ENCODE measurements at regions of chrX and their contacts with region 1.

Region 1: GRCh38 chrX:153971450-153972367 is at the start of gene HCFC1:
- DNase-seq: peak; percentile 96
- H3K4me3 Mint-ChIP-seq: peak within 1 kb of the TSS; percentile 98
- H3K27ac Mint-ChIP-seq: peak within 1 kb of the TSS; percentile 100
- H3K4me1 Mint-ChIP-seq: peaks cover 30% of the 10 kb centered on the region
- H3K27me3 Mint-ChIP-seq: no peaks in the 10 kb centered on the region
- total RNA-seq, gene HCFC1: 107 and 109 TPM in 2 replicates

Region 2: DNA sequence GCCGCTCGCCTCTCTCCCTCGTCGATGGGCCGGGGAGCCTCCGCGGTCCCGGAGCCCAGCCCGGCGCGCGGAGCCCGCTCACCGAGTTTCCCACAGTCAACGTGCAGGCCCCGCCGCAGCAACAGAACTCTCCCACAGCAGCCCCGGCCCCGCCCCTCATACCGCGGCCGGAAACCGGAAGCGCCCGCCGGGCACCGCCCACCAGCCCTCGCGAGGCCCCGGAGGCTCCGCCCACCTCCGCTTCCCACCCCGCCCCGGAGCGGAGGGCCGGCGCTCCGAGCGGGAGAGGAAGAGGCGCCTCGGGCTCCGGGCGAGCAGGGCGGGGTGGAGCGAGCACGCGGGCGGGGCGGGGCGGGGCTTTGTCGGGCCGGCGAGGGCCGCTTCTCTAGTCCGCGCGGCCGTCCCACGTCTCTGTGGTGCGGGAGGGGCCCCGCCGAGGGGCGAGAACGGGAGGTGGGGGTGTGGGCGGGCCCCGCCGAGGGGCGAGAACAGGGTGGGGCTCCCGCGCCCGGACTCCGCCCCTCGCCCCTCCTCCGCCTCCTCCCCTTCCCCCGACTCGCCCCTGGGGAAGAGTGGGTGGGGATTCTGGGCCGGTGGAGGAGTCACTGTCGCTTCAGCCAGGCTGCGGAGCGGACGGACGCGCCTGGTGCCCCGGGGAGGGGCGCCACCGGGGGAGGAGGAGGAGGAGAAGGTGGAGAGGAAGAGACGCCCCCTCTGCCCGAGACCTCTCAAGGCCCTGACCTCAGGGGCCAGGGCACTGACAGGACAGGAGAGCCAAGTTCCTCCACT is 247.3 kb before region 1 on chrX and contains the starts of genes ABCD1 and BCAP31:
- intact Hi-C with region 1: loop called (anchors 2 kb)
- DNase-seq: peak; percentile 97
- H3K4me3 Mint-ChIP-seq: peak within 1 kb of the TSS; percentile 90
- H3K27ac Mint-ChIP-seq: peak within 1 kb of the TSS; percentile 89
- H3K4me1 Mint-ChIP-seq: peaks cover 14% of the 10 kb centered on the region
- H3K27me3 Mint-ChIP-seq: no peaks in the 10 kb centered on the region
- total RNA-seq, gene ABCD1: 6.6 and 7.7 TPM in 2 replicates
- total RNA-seq, gene BCAP31: 154 and 157 TPM in 2 replicates

Region 3: GRCh38 chrX:153778684-153779101 is 193.0 kb before region 1 on chrX:
- intact Hi-C with region 1: no loop called
- DNase-seq: no peak
- H3K4me3 Mint-ChIP-seq: no peak overlapping the region
- H3K27ac Mint-ChIP-seq: no peak overlapping the region
- H3K4me1 Mint-ChIP-seq: no peaks in the 10 kb centered on the region
- H3K27me3 Mint-ChIP-seq: peaks cover 6% of the 10 kb centered on the region

Region 4: DNA sequence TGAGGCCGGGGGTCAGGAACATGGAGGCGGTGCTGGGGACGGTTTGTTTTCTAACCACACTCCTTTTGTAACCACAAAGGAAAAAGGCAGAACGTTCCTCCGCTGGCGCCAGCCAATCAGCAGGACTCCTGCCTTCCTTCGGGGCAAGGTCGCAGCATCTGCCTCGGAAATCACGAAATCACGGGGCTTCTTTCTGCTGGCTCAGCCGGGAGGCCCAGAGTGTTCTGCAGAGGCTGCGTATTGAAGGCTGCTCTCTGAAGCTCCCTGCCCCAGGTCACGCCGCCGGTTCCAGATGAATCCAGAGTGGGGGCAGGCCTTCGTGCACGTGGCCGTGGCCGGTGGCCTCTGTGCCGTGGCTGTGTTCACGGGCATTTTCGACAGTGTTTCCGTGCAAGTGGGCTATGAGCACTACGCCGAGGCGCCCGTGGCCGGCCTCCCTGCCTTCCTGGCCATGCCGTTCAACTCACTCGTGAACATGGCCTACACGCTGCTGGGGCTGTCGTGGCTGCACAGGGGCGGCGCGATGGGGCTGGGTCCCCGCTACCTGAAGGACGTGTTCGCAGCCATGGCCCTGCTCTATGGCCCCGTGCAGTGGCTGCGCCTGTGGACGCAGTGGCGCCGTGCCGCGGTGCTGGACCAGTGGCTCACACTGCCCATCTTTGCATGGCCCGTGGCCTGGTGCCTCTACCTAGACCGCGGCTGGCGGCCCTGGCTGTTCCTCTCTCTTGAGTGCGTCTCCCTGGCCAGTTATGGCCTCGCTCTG is 10.2 kb after region 1 on chrX:
- intact Hi-C with region 1: loop called (anchors 1 kb)
- DNase-seq: peak; percentile 91
- H3K4me3 Mint-ChIP-seq: peak overlapping the region; percentile 75
- H3K27ac Mint-ChIP-seq: peak overlapping the region; percentile 97
- H3K4me1 Mint-ChIP-seq: peaks cover 34% of the 10 kb centered on the region
- H3K27me3 Mint-ChIP-seq: no peaks in the 10 kb centered on the region

Region 5: DNA sequence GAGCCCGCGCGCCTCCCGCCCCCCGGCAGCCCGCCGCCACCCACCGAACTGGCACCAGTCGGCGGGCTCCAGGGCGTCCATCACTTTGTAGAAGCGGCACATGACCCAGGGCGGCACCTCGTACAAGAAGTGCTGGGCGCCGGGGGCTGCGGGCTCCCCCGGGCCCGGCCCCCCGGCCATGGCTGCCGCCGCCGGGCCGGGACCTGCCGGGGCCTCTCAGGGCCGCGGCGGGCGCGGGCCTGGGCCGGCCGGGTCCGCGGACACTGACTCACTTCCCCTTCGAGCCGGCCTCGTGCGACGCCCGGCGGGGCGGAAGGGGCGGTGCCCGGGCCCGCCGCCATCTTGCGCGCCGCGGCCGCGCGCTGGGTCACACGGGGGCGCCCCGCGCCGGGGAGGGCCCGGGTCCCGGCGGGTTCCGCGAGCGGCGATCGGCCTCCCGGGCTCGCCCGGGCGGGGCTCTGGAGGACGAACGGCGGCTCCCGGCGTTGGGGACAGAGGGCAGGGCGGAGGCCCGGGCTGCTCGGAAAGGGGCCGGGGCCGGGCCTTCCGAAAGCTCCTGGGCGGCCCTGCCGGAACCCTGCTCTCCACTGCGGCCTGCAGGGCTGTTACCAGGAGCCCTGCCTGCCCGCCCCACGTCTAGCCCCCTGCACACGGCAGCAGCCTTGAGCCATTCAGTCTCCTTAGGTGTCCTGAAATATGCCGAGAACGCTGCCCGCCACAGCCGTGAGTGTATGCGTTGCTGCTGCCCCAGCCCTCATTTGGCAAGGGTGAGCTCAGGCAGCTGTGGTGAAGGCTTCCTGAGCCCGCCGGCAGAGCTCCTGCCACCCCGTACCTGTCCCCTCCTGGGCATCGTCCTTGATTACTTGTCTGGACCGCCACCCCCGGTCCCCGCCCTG is 48.2 kb after region 1 on chrX and contains the start of gene IRAK1:
- intact Hi-C with region 1: loop called (anchors 2 kb)
- DNase-seq: peak; percentile 90
- H3K4me3 Mint-ChIP-seq: peak within 1 kb of the TSS; percentile 92
- H3K27ac Mint-ChIP-seq: peak within 1 kb of the TSS; percentile 94
- H3K4me1 Mint-ChIP-seq: peaks cover 11% of the 10 kb centered on the region
- H3K27me3 Mint-ChIP-seq: no peaks in the 10 kb centered on the region
- total RNA-seq, gene IRAK1: 177 and 192 TPM in 2 replicates

Region 6: DNA sequence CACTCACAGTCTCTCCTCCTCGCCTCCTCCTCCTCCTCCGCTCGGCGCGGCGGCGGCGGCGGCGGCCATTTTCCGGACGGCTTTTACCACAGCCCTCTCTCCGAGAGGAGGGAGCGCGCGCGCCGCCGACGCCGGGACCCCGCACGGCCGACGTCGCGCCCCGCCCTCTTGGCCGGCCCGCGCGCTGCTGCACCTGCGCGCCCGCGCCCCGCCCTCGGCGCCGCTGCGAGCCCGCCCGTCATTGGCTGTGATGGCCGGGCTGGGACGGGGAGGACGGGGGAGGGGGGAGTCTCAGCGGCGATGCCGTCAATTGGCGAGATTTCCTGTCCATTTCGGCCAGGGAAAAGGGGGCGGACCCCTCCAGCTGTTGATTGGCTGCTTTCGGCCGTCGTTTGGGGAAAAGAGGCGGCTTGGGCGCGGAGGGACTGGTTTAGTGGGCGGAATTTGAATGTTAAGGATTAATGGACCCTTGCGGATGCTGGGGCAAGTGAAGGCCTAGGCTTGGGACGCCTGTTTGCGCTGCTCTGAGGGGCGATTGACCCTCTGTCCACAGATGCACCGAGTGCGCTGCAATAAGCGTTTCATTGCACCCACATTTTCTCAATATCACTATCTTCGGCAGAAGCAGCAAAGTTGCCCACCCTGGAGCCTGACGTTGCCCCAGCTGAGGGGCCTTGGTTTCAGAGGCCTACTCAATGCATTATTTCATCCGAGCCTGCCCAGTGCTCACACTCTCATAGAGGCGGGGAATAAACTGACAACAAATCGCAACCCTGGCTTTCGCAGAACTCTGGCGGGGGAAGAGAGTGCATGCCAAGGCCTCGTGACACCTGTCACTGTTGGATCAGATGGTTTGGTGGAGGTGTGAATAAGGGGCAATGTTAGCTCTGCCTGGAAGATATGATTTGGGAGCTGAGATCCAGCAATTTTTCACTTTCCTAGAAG is 126.2 kb after region 1 on chrX and contains the start of gene MECP2:
- intact Hi-C with region 1: loop called (anchors 5 kb)
- DNase-seq: peak; percentile 96
- H3K4me3 Mint-ChIP-seq: peak within 1 kb of the TSS; percentile 93
- H3K27ac Mint-ChIP-seq: peak within 1 kb of the TSS; percentile 99
- H3K4me1 Mint-ChIP-seq: peaks cover 44% of the 10 kb centered on the region
- H3K27me3 Mint-ChIP-seq: peaks cover 6% of the 10 kb centered on the region
- total RNA-seq, gene MECP2: 55.1 and 58.8 TPM in 2 replicates

Region 7: GRCh38 chrX:154369449-154370299 is 398.0 kb after region 1 on chrX:
- intact Hi-C with region 1: loop called (anchors 1 kb)
- DNase-seq: peak; percentile 90
- H3K4me3 Mint-ChIP-seq: peak overlapping the region; percentile 95
- H3K27ac Mint-ChIP-seq: peak overlapping the region; percentile 93
- H3K4me1 Mint-ChIP-seq: peaks cover 13% of the 10 kb centered on the region
- H3K27me3 Mint-ChIP-seq: no peaks in the 10 kb centered on the region

Measured in activated CD4-positive, alpha-beta T cell treated with anti-CD3 and anti-CD28 coated beads, Interleukin-2, amount 10 ng/mL, durations not matched to agents 24 days and 14 days (primary cell).